ENCODE measurements at regions of chr7 and their contacts with region 1.

Region 1: DNA sequence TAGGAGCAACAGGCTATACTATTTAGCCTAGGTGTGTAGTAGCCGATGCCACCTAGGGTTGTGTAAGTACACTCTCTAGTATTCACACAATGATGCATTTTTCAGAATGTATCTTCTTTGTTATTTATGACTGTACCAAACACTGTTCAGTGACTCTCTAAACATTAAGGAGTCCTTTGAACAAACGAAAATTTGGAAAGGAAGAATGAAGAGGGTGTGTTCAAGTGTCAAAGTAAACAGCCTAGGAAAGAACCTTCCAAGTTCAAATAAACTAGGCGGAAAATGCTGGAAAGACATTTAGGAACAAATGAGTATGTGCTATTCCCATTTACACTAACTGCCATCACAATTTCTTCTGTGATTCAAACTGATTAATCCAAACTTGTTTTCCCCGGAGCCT is 142.4 kb downstream of the CHCHD3 start:
- DNase-seq: no peak
- H3K4me3 ChIP-seq: no peak overlapping the region
- CTCF ChIP-seq: no peak

Region 2: DNA sequence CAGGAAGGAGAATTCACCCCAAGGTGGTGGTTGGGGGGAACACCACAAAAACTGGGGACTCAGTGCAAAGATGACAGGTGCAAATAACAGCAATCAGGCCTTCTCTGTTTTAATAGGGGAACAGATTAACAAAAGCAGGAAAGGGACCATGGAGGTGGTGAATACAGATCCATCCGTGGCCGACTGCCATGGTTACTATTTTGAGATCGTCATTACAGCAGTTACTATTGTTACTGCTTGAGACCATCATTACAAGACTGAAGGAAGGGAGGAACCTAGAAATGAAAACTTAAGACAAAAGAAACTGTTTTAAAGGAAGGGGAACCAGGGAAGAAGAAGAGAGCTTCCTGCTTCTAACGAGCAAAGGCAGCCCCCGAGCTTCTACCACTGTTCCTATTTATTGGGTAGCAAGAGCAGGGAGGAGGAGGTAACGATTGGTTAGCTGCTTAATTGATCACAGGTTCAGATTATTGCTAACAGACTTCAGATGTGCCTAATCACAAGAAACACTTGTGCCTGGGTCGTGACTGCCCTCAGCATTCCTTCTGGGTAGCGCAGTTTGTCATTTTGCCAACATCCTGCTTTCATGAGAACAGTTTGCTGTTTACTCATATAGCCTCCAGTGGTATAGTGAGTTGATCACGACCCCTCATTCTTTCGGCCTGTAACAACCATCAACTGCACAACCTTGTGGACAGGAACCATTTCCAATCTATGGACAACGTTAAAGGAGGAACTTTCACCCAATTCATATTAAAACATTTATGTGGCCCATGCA is 73.9 kb before region 1 on chr7:
- in situ Hi-C with region 1: loop called (anchors 5 kb)
- DNase-seq: no peak
- H3K4me3 ChIP-seq: no peak overlapping the region
- CTCF ChIP-seq: no peak

Measured in astrocyte of the cerebellum (primary cell).